ENCODE measurements at regions of chr12 and their contacts with region 1.

Region 1: DNA sequence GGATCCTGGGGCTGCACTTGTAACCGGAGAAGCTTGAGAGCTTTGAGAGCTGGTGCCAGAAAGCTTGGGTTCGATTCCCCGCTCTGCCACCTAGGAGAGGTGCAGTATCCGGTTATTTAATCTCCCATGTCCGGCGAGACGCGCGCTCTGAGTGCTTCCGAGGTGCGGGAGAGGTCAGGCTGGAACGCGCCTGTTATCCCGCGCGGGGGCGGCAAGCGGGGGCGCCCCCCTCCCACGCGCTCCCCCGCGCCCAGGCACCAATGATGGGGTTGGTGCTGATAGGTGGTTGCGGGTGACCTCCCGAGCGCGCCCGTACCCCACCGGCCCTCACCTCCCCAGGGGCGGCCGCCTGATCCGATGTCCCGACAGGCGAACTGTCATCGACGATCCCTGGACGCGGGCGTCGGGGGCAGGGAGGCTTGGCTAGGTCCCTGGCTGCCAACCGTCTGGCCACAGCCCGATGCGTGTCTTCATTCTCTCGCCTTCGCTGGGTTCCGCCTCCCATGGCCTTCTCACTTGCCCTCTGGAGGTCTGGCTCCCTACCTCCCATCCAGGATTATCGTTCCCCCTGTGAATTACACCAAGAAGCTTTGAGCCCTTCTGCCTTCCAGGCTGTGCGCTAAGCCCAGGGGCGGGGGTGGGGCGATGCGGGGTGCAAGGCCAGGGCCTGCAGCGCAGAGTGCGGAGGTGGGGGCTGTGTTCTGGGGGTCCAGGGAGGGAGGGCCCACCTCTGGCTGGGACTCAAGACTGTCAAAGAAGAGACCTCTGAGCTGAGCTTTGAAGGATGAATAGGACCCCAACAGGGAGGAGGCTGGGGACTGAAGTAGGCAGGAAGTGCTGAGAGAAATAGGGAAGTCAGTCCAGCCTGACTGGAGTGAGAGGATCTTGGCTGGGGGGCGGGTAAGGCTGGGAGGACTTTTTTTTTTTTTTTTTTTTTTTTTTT is 7.6 kb upstream of the RACGAP1 start:
- DNase-seq: no peak
- H3K4me3 ChIP-seq: no peak overlapping the region
- H3K27ac ChIP-seq: no peak overlapping the region
- H3K4me1 ChIP-seq: no peaks in the 10 kb centered on the region
- H3K27me3 ChIP-seq: no peaks in the 10 kb centered on the region
- CTCF ChIP-seq: no peak

Region 2: DNA sequence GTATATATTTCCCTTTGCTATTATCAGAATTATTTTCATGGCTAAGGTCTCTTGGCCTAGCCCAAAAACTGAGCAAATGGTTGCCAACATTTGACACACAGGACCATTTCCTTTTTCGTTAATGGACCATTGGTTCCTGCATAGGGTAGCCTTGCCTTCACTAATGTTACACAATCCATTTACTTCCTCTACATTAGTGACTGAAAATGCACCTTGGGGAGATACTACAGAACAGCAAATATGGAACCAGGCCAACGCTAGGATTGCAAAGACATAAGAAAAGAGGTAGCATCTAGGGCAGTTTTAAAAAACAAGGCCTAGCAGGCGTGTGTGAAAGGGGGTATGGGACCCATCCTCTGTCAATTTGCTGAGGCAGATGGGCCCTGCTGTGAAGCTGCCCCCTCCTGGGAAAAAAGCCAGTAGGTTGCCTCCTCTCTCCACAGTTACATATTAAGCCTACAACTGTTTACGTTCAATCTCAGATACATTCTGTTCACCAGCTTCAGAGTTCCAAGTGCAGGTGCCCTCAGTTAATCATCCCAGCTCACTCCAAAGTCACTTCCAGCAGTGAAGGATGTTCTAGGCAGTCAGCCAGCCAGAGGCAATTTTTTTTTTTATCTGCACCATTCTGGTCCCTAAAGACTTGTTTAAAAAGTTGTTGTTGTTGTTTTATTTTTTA is 45.1 kb before region 1 on chr12:
- CTCF ChIA-PET with region 1: interaction called, 13 read pairs
- POLR2A ChIA-PET with region 1: no interaction called
- intact Hi-C with region 1: no loop called
- DNase-seq: no peak
- H3K4me3 ChIP-seq: no peak overlapping the region
- H3K27ac ChIP-seq: no peak overlapping the region
- H3K4me1 ChIP-seq: no peaks in the 10 kb centered on the region
- H3K27me3 ChIP-seq: no peaks in the 10 kb centered on the region
- CTCF ChIP-seq: no peak

Region 3: GRCh38 chr12:50055831-50056638 is 23.1 kb after region 1 on chr12:
- CTCF ChIA-PET with region 1: no interaction called
- POLR2A ChIA-PET with region 1: no interaction called
- intact Hi-C with region 1: no loop called
- DNase-seq: peak in 1 of 2 experiments; percentile 37
- H3K4me3 ChIP-seq: no peak overlapping the region
- H3K27ac ChIP-seq: no peak overlapping the region
- H3K4me1 ChIP-seq: peaks cover 5% of the 10 kb centered on the region
- H3K27me3 ChIP-seq: peaks cover 23% of the 10 kb centered on the region
- CTCF ChIP-seq: peak; percentile 93

Measured in PC-9 (cell line).